ENCODE measurements at regions of chr4 and their contacts with region 1.

Region 1: GRCh38 chr4:804804-805203 is 21.1 kb downstream of the CPLX1 start:
- DNase-seq: no peak
- ATAC-seq: no peak
- H3K4me3 ChIP-seq: no peak overlapping the region
- H3K4me3 Mint-ChIP-seq: no peak overlapping the region
- H3K27ac ChIP-seq: no peak overlapping the region
- H3K27ac Mint-ChIP-seq: no peak overlapping the region
- H3K4me1 ChIP-seq: peaks cover 7% of the 10 kb centered on the region
- H3K4me1 Mint-ChIP-seq: no peaks in the 10 kb centered on the region
- H3K27me3 ChIP-seq: peaks cover 0 to 8% of the 10 kb centered on the region in 2 experiments
- H3K27me3 Mint-ChIP-seq: peaks cover 28% of the 10 kb centered on the region
- CTCF ChIP-seq: no peak

Region 2: DNA sequence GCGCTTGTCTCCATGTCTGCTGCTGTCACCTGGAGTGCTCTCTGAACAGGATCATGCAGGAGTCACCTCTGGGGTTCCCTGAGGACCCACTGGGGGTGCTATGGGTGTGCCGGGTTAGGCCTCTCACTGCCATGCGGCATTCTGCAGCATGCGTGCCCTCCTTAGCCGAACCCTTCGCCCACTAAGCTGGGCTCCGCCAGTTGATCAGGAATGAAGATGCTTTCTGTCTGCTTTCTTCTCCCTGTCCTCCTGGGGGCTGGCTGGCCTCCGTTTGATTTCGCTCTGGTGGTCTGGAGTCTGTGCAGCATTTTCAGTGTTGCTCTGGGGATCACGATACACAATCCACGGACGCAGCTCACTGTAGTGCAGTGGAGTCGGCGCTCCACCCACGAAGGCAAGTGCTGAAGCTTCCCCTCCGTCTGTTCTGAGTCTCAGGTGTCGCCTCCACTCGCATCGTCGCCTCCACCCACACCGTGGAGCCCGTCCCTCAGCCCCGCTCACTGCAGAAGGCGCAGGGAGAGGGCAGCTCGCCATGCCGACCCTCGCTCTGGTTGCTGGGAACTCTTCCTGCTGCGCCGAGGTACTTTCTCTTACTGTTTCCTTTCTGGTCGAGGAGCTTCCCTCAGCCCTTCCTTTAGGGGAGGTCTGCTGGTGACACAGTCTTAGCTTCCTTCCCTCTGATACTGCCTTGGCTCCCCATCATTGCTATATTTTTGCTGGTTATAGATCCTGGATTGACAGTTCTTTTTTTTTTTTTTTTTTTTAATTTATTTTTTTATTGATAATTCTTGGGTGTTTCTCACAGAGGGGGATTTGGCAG is 1021.9 kb after region 1 on chr4:
- CTCF ChIA-PET with region 1: no interaction called
- POLR2A ChIA-PET with region 1: no interaction called
- intact Hi-C with region 1: loop called in 1 of 2 experiments (anchors 5 kb)
- DNase-seq: no peak
- ATAC-seq: no peak
- H3K4me3 ChIP-seq: no peak overlapping the region
- H3K4me3 Mint-ChIP-seq: no peak overlapping the region
- H3K27ac ChIP-seq: no peak overlapping the region
- H3K27ac Mint-ChIP-seq: no peak overlapping the region
- H3K4me1 ChIP-seq: no peaks in the 10 kb centered on the region
- H3K4me1 Mint-ChIP-seq: no peaks in the 10 kb centered on the region
- H3K27me3 ChIP-seq: no peaks in the 10 kb centered on the region
- H3K27me3 Mint-ChIP-seq: no peaks in the 10 kb centered on the region
- CTCF ChIP-seq: no peak